PC-9 (cell line): ENCODE measurements at regions of chr11 and their contacts with region 1.

Region 1: DNA sequence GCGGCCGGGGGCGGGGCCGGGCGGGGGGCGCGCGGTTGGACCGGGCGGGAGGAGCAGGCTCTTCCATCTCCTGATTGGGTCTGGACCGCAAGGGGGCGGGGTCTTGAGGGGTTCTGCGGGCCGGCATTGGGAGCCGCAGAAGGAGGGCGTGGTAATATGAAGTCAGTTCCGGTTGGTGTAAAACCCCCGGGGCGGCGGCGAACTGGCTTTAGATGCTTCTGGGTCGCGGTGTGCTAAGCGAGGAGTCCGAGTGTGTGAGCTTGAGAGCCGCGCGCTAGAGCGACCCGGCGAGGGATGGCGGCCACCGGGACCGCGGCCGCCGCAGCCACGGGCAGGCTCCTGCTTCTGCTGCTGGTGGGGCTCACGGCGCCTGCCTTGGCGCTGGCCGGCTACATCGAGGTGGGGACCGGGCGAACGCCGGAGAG is at the start of gene APLP2:
- DNase-seq: peak; percentile 95 to 97
- H3K4me3 ChIP-seq: peak within 1 kb of the TSS; percentile 55
- H3K27ac ChIP-seq: peak within 1 kb of the TSS; percentile 70
- H3K4me1 ChIP-seq: peaks cover 48% of the 10 kb centered on the region
- H3K27me3 ChIP-seq: no peaks in the 10 kb centered on the region
- CTCF ChIP-seq: no peak
- total RNA-seq, gene APLP2: 306 and 350 TPM in 2 replicates

Region 2: GRCh38 chr11:130022798-130023583 is 46.7 kb before region 1 on chr11:
- CTCF ChIA-PET with region 1: no interaction called
- POLR2A ChIA-PET with region 1: no interaction called
- intact Hi-C with region 1: loop called (anchors 1 kb)
- DNase-seq: peak; percentile 71 to 86
- H3K4me3 ChIP-seq: peak overlapping the region; percentile 25; the same call in 1 of the 2 replicates
- H3K27ac ChIP-seq: peak overlapping the region; percentile 76
- H3K4me1 ChIP-seq: peaks cover 33% of the 10 kb centered on the region
- H3K27me3 ChIP-seq: no peaks in the 10 kb centered on the region
- CTCF ChIP-seq: no peak

Region 3: GRCh38 chr11:130124096-130124495 is 54.4 kb after region 1 on chr11:
- CTCF ChIA-PET with region 1: no interaction called
- POLR2A ChIA-PET with region 1: interaction called, 4 read pairs
- intact Hi-C with region 1: loop called (anchors 2 kb)
- DNase-seq: peak; percentile 84 to 99
- H3K4me3 ChIP-seq: peak overlapping the region; percentile 41; the same call in 1 of the 2 replicates
- H3K27ac ChIP-seq: peak overlapping the region; percentile 93
- H3K4me1 ChIP-seq: peaks cover 47% of the 10 kb centered on the region
- H3K27me3 ChIP-seq: no peaks in the 10 kb centered on the region
- CTCF ChIP-seq: no peak; the same call in 1 of the 2 replicates

Region 4: DNA sequence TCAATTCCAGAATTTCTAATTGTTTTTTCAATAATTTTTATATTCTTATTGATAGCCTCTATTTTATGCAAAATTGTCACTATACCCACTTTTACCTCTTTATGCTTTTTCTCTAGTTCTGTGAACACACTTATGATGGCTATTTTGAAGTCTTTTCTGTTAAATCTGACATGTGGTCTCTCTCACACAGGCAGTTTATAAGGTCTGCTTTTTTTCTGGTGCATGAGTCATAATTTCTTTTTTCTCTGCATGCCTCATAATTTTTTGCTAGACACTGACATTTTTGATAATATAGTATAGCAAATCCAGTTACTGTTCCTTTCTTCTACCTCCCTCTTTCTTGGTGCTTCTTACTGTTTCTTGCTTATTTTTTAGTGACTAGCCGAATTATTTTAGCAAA is 209.0 kb after region 1 on chr11:
- CTCF ChIA-PET with region 1: no interaction called
- POLR2A ChIA-PET with region 1: no interaction called
- intact Hi-C with region 1: no loop called
- DNase-seq: no peak
- H3K4me3 ChIP-seq: no peak overlapping the region
- H3K27ac ChIP-seq: no peak overlapping the region
- H3K4me1 ChIP-seq: no peaks in the 10 kb centered on the region
- H3K27me3 ChIP-seq: no peaks in the 10 kb centered on the region
- CTCF ChIP-seq: no peak